Heart right ventricle (tissue), 16 donors: ENCODE measurements at regions of chr6 and their contacts with region 1.

Region 1: DNA sequence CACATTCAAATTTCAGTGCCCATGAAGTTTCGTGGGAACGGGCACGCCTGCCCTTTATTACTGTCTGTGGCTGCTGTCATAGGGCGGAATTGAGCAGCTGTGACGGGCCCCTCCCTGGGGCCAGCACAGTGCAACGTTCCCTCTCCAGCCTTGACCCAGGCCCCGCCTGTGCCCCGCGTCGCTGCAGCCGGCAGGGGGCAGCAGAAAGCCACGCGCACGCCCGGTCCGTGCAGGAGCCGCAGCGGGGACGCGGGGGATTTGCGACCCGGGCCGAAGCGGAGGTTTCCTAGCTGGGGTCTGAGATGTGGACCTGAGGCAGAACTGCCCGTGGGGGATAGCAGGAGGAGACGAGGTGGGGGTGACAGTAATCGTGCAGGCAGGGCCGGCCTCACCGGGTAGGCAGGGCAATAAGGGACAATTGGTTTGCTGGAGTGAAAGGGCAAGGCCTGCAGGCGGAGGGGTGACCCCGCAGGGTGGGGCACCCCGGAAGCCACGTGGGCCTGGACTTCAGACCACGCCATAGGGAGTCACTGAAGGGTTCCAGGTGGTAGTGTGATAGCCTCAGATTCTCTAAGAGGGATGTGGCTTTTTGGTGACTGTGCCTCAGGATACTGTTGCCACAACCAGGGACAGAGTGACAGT is 54.4 kb downstream of the SYTL3 start:
- DNase-seq: peak; percentile 75 to 89
- ATAC-seq: peak; percentile 82 to 93 (median 90)
- H3K4me3 ChIP-seq: peak overlapping the region in 9 of 10 donors; percentile 16 to 53 (median 43)
- H3K27ac ChIP-seq: peak overlapping the region; percentile 11 to 75 (median 69)
- H3K4me1 ChIP-seq: peaks cover 17 to 53% (median 38%) of the 10 kb centered on the region in 9 donors
- H3K27me3 ChIP-seq: no peaks in the 10 kb centered on the region
- CTCF ChIP-seq: peak; percentile 96 to 100 (median 99)

Region 2: GRCh38 chr6:157328108-157328692 is 1376.1 kb before region 1 on chr6:
- intact Hi-C with region 1: no loop called
- DNase-seq: no peak
- ATAC-seq: no peak
- H3K4me3 ChIP-seq: peak overlapping the region in 4 of 10 donors; percentile 11 to 23 (median 12)
- H3K27ac ChIP-seq: peak overlapping the region in 6 of 10 donors; percentile 30 to 96 (median 84)
- H3K4me1 ChIP-seq: peaks cover 5 to 48% (median 18%) of the 10 kb centered on the region in 9 donors
- H3K27me3 ChIP-seq: peaks cover 0 to 3% (median 0%) of the 10 kb centered on the region in 7 donors
- CTCF ChIP-seq: no peak

Region 3: DNA sequence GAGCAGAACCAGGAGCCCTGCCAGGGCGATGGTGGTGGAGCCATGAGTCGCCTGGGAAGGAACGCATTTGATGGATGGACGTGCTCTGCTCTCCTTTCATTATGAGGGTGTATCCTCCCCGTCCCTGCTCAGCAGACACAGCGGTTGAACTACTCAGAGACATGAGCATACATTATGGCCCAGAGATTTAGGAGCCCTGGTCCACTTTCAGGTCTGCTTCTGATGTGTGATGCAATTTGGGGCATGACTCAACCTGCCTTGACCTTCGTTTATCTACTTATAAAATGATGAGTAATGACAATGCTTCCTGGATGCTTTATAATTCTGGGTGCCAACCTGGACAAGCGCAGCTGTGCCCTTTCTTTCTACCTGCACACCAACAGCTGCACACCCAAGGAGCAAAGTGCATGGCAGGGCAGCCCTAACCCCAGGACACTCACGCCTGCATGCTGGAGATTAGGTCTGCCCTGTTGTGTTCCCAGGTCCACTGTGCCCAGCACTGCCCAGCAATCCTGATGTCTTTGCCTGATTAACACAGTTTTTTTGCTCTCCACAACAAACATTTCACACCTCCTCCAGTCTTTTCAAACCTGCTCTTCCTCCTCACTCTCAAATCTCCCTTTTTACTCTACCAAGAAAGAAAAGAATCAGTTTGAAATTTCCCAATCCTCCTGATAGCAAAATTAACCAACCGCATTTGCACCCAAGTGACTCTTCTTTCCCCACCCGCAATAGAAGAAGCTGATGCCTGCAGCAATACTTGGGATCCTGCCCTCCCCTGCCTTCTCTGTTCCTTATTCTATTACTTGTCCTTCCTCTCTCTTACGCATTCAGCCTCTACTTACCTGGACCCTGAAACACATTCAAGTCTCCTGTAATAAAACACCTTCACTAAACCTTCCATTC is 33.7 kb after region 1 on chr6:
- intact Hi-C with region 1: no loop called
- DNase-seq: no peak
- ATAC-seq: peak in 3 of 8 donors; percentile 17 to 64 (median 45)
- H3K4me3 ChIP-seq: no peak overlapping the region
- H3K27ac ChIP-seq: no peak overlapping the region
- H3K4me1 ChIP-seq: no peaks in the 10 kb centered on the region
- H3K27me3 ChIP-seq: no peaks in the 10 kb centered on the region
- CTCF ChIP-seq: no peak

Region 4: GRCh38 chr6:158769771-158770432 is 65.6 kb after region 1 on chr6:
- intact Hi-C with region 1: loop called in 2 of 10 experiments (anchors 5 kb)
- DNase-seq: peak; percentile 41 to 52
- ATAC-seq: peak; percentile 44 to 85 (median 62)
- H3K4me3 ChIP-seq: no peak overlapping the region
- H3K27ac ChIP-seq: peak overlapping the region; percentile 45 to 77 (median 65)
- H3K4me1 ChIP-seq: peaks cover 12 to 56% (median 44%) of the 10 kb centered on the region in 9 donors
- H3K27me3 ChIP-seq: no peaks in the 10 kb centered on the region
- CTCF ChIP-seq: no peak

Region 5: GRCh38 chr6:158793432-158793831 is 89.1 kb after region 1 on chr6:
- intact Hi-C with region 1: loop called in 2 of 10 experiments (anchors 1 to 10 kb)
- DNase-seq: no peak
- ATAC-seq: peak in 5 of 8 donors; percentile 38 to 54 (median 49)
- H3K4me3 ChIP-seq: no peak overlapping the region
- H3K27ac ChIP-seq: no peak overlapping the region
- H3K4me1 ChIP-seq: peaks cover 4 to 71% (median 40%) of the 10 kb centered on the region in 9 donors
- H3K27me3 ChIP-seq: no peaks in the 10 kb centered on the region
- CTCF ChIP-seq: peak in 8 of 9 donors; percentile 23 to 56 (median 43)

Region 6: GRCh38 chr6:158819213-158819909 is 115.1 kb after region 1 on chr6 and contains the start of gene EZR:
- intact Hi-C with region 1: loop called in 6 of 10 experiments (anchors 1 to 10 kb)
- DNase-seq: peak; percentile 74 to 87
- ATAC-seq: peak; percentile 71 to 81 (median 78)
- H3K4me3 ChIP-seq: peak within 1 kb of the TSS; percentile 57 to 95 (median 87)
- H3K27ac ChIP-seq: peak within 1 kb of the TSS; percentile 82 to 96 (median 94)
- H3K4me1 ChIP-seq: peaks cover 3 to 43% (median 31%) of the 10 kb centered on the region in 9 donors
- H3K27me3 ChIP-seq: no peaks in the 10 kb centered on the region
- CTCF ChIP-seq: peak in 2 of 9 donors; percentile 7 to 17
- total RNA-seq, gene EZR: 148 to 227 (median 186) TPM

Region 7: GRCh38 chr6:158972241-158973233 is 268.2 kb after region 1 on chr6:
- intact Hi-C with region 1: loop called (anchors 1 to 5 kb)
- DNase-seq: no peak
- ATAC-seq: peak in 4 of 8 donors; percentile 41 to 74 (median 55)
- H3K4me3 ChIP-seq: no peak overlapping the region
- H3K27ac ChIP-seq: no peak overlapping the region
- H3K4me1 ChIP-seq: peaks cover 0 to 6% (median 0%) of the 10 kb centered on the region in 9 donors
- H3K27me3 ChIP-seq: no peaks in the 10 kb centered on the region
- CTCF ChIP-seq: peak; percentile 34 to 77 (median 61)

Region 8: DNA sequence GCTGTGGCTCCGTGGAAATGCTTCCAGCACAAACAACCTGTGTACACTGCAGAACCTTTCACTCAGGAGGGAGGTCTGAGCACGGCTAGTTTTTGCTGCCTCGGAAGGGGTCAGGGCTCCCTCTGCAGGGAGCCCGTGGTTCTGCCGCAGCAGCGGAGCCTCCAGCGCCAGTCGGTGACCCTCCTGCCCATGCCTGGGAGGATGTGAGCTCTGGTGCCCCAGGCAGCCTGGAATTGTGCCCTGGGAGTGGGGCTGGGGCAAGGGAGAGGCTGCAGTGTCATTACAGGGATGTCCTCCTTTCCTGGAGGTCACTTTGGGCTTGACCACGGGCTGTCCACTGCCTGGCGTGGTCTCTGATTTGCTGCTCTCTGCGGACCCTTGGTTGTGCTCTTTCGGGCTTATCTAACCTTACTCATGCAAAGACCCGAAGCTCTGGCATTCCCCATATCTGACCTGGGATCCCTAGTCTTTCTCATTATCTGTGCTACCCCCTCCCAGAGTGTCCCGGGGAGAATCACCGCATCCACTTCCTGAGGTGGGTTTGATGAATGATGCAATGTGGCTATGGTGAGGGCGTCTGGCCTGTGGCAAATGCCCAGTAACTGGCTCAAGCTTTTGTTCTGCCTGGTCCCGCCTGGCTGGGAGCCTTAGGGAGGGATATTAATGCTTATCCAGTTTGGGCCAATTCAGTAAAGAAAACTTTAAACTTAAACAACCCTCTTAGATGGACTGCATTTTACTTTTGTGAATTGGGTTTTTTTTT is 400.0 kb after region 1 on chr6:
- intact Hi-C with region 1: loop called in 4 of 10 experiments (anchors 5 to 10 kb)
- DNase-seq: peak; percentile 43 to 62
- ATAC-seq: peak; percentile 79 to 91 (median 86)
- H3K4me3 ChIP-seq: no peak overlapping the region
- H3K27ac ChIP-seq: peak overlapping the region in 1 of 10 donors; percentile 11
- H3K4me1 ChIP-seq: peaks cover 0 to 44% (median 8%) of the 10 kb centered on the region in 9 donors
- H3K27me3 ChIP-seq: peaks cover 0 to 18% (median 0%) of the 10 kb centered on the region in 7 donors
- CTCF ChIP-seq: peak; percentile 39 to 96 (median 82)

Region 9: DNA sequence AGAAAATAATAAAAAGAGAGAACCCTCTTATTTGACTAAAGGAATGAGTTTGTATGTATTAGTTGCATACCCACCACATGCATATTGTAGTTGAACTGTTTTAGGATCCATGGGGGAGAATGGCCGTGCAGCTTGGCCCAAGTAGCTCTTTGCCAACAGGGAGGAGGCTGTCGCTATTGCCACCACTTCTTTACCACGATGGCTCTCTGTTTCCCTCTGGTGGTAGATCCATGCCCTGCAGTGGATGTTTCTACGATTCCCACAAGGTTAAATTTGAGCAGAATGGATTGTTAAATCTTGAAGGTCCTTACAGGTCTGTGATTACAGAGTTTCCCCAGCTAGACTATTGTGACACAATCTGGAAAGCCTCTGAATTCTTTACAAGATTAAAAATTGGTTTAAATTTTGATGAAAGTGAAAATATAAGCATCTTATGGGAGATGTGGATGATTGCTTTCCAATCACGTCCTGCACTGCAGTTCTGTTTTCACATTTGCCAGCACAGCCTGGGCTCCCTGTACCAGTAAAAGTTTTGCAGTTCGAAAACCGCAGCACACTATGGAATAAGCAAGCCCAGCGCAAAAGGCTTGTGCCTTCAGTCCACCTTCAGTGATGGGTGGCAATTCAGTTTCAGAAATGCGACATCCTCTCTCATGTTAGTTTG is 430.5 kb after region 1 on chr6:
- intact Hi-C with region 1: loop called in 2 of 10 experiments (anchors 10 kb)
- DNase-seq: peak in 1 of 2 donors; percentile 60
- ATAC-seq: peak; percentile 56 to 79 (median 73)
- H3K4me3 ChIP-seq: no peak overlapping the region
- H3K27ac ChIP-seq: no peak overlapping the region
- H3K4me1 ChIP-seq: no peaks in the 10 kb centered on the region
- H3K27me3 ChIP-seq: peaks cover 0 to 25% (median 5%) of the 10 kb centered on the region in 7 donors
- CTCF ChIP-seq: peak; percentile 74 to 97 (median 90)